Ascending aorta (tissue), 2 donors: ENCODE measurements at regions of chr12 and their contacts with region 1.

Region 1: DNA sequence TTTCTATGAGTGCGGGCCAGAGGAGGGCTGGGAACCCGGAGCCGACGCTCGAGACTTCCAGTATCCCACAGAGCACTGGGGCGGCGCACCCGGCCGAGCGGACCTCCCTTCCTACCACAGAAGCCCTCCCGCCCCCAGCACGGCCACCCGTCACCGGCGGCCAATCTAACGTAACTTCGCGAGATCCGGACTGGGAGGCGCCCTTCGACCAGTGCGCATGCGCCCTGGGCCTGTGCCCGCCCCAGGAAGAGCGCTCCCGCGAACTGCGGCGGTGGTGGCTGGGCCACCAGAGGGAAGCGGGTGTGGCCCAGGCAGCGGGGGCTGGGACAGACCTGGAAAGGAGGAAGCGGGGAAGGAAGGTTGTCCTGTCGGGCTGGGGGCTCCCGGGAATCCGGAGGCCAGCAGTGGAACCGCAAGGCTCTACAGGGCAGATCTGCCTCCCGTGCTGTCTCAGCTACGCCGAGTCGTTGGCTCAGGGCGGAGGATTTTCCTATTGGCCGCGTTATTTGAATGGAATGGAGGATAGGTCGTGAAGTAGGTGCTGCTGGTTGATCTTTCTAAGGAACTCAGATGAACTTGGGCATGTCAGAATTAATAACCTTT is at the start of gene PPP1R12A:
- DNase-seq: peak; percentile 83 to 98
- H3K4me3 ChIP-seq: peak within 1 kb of the TSS; percentile 75 to 93
- H3K27ac ChIP-seq: peak within 1 kb of the TSS; percentile 93 to 99
- H3K4me1 ChIP-seq: peaks cover 0 to 2% of the 10 kb centered on the region in 2 donors
- H3K27me3 ChIP-seq: no peaks in the 10 kb centered on the region
- CTCF ChIP-seq: peak in 1 of 3 experiments; percentile 8
- total RNA-seq, gene PPP1R12A: 374 TPM

Region 2: DNA sequence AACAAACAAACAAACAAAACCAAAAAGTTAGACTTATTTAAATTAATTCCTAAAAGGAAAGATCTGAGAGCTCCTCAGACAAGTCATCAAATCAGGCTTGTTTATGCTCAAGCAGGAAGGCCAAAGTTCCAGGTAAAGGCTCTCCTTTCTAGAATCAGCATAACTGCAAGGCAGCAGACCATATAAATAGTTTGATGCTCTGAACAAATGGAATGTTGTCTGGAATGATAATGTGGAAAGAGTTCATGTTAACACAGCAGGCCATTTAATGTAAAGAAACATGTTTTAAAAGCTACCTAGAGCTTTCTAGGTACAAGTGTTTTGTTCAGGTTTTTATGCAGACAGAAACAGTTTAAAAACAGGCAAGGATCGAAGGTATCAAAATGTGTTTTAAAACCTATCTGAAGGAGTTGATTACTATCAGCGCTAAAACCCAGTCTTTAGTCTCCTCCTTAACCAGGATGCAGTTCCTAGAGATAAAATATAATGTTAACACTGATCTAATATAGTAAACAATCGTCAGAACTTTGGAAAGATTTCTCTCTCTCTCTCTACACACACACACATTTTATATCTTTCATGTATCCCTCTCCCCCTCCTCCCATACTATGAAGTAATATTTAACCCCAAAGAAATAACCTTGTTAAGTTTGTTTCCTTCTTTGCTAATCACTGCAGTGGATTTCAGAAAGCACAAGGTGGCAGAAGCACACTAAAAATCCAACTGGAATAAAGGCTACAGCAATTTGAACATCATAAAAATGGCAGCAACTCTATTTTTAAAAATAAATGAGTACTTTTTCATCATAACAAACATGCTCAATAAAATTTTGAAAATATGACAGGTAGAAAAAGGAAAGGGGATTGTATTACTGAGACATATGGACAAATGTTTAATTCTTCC is 379.8 kb before region 1 on chr12:
- intact Hi-C with region 1: loop called (anchors 10 kb)
- DNase-seq: no peak
- H3K4me3 ChIP-seq: no peak overlapping the region
- H3K27ac ChIP-seq: peak overlapping the region; percentile 67 to 76
- H3K4me1 ChIP-seq: peaks cover 3 to 59% of the 10 kb centered on the region in 2 donors
- H3K27me3 ChIP-seq: no peaks in the 10 kb centered on the region
- CTCF ChIP-seq: peak; percentile 38 to 70 (median 61)

Region 3: GRCh38 chr12:79690638-79691493 is 244.3 kb before region 1 on chr12 and contains the start of gene PAWR:
- intact Hi-C with region 1: loop called (anchors 5 kb)
- DNase-seq: peak in 1 of 2 donors; percentile 81
- H3K4me3 ChIP-seq: peak within 1 kb of the TSS; percentile 96 to 99
- H3K27ac ChIP-seq: peak within 1 kb of the TSS; percentile 93 to 99
- H3K4me1 ChIP-seq: peaks cover 0 to 7% of the 10 kb centered on the region in 2 donors
- H3K27me3 ChIP-seq: no peaks in the 10 kb centered on the region
- CTCF ChIP-seq: peak; percentile 2 to 44 (median 3)
- total RNA-seq, gene PAWR: 75.4 TPM

Region 4: GRCh38 chr12:79818856-79819255 is 116.3 kb before region 1 on chr12:
- intact Hi-C with region 1: loop called (anchors 10 kb)
- DNase-seq: no peak
- H3K4me3 ChIP-seq: peak overlapping the region in 1 of 2 donors; percentile 1
- H3K27ac ChIP-seq: peak overlapping the region; percentile 55 to 70
- H3K4me1 ChIP-seq: peaks cover 0 to 19% of the 10 kb centered on the region in 2 donors
- H3K27me3 ChIP-seq: no peaks in the 10 kb centered on the region
- CTCF ChIP-seq: no peak

Region 5: DNA sequence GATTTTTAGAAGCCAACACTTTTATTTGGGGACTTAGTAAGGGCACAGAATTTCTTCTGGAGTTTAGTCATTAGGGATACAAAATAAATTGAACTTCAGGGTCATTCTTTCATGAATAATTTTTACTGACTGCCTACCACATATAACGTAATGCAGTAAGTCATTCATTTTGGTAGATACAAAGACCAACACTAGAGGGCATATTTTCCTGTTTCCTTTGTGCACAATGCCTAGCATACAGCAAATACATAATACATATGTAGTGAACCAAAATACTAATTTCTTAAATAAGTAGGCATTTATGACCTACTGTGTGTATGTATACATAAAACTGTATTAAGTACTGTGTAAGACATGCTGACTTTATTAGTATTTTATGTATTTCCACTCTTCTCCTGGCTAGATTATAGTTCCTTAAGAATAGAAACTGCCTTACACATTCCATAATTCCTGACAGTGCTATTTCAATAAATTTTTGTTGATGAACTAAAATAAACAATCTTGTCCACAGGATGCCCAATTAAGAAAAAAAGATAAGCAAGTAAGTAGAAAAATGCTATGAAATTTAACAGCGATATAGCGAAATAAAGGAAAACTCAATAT is 48.1 kb before region 1 on chr12:
- intact Hi-C with region 1: loop called (anchors 2 kb)
- DNase-seq: no peak
- H3K4me3 ChIP-seq: no peak overlapping the region
- H3K27ac ChIP-seq: no peak overlapping the region
- H3K4me1 ChIP-seq: peaks cover 0 to 56% of the 10 kb centered on the region in 2 donors
- H3K27me3 ChIP-seq: no peaks in the 10 kb centered on the region
- CTCF ChIP-seq: peak in 2 of 3 experiments; percentile 49 to 55

Region 6: GRCh38 chr12:79959484-79959883 is 24.4 kb after region 1 on chr12:
- intact Hi-C with region 1: loop called (anchors 2 kb)
- DNase-seq: peak in 1 of 2 donors; percentile 70
- H3K4me3 ChIP-seq: no peak overlapping the region
- H3K27ac ChIP-seq: peak overlapping the region; percentile 43 to 71
- H3K4me1 ChIP-seq: peaks cover 0 to 6% of the 10 kb centered on the region in 2 donors
- H3K27me3 ChIP-seq: no peaks in the 10 kb centered on the region
- CTCF ChIP-seq: no peak